ENCODE measurements at regions of chr15 and their contacts with region 1.

Region 1: DNA sequence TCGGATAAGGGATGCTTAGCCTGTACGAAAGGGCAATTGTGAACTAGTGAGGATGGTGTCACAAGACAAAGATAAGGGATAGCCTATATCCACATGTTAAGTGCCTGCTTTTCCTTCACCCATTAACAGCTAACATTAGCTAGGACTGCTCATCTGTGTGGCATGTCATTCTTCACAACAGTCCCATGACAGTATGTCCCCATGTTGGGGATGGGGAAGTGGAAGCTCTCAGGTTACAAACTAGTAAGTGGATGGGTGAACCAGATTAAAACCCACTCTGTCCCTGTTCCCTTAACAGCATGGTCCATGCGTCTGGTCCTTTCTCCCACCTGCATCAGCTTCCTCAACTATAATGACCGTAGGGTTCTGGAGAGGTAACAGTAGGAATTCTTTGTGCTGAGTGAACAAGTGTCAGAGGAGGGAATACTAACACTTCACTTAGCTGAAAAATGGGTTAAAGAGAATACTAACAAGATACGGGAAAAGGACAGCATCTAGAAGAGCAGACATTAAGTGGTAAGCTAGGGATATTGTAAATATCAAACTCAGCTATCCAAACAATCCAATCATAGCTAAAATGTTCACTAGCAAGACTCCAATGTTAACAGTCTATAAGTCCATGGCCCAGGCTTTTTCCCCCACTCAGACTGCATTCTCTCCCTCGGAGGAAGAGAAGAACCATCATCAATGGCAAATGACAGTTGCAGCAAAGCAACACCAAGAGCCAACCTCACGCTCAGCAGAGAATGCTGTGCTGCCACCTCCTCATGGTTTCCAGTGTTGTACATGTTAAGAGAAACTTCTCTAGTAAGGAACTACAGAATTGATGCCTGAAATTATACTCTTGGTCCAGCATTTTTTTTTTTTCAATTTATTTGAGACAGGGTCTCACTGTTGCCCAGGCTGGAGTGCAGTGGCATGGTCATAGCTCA is 5.0 kb downstream of the RPLP1 start:
- DNase-seq: no peak
- H3K4me3 ChIP-seq: no peak overlapping the region
- H3K27ac ChIP-seq: no peak overlapping the region
- H3K4me1 ChIP-seq: peaks cover 12% of the 10 kb centered on the region
- H3K27me3 ChIP-seq: no peaks in the 10 kb centered on the region
- CTCF ChIP-seq: no peak

Region 2: DNA sequence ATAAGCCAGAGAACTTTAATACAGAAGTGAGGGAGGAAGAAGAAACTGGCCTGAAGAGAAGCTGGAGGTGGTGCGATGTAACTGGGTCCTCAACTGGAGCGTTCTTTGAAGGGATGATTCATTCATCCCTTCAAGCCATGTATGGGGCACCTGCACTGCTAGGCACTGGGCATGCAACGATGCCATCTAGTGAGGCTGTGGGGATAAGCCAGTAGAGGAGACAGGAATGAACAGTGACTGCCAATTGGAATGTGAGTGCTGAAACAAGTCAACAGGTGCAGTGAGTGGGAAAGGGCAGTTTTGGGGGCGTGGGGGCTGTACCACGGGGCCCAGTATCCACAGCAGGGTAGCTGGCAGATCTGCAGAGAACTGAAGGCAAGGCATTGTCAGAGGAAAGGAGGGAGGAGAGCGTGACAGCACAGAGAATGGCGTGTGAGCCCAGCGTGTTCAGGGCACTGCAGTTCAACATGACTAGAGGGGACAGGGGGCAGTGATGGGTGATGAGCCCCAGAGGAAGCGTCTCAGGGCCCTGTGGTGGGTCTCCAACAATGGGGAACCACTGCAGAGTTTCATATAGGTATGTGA is 47.2 kb before region 1 on chr15:
- intact Hi-C with region 1: no loop called
- DNase-seq: no peak
- H3K4me3 ChIP-seq: no peak overlapping the region
- H3K27ac ChIP-seq: no peak overlapping the region
- H3K4me1 ChIP-seq: no peaks in the 10 kb centered on the region
- H3K27me3 ChIP-seq: no peaks in the 10 kb centered on the region
- CTCF ChIP-seq: no peak

Region 3: GRCh38 chr15:69422336-69422895 is 35.2 kb before region 1 on chr15:
- intact Hi-C with region 1: loop called (anchors 5 kb)
- DNase-seq: no peak
- H3K4me3 ChIP-seq: no peak overlapping the region
- H3K27ac ChIP-seq: no peak overlapping the region
- H3K4me1 ChIP-seq: no peaks in the 10 kb centered on the region
- H3K27me3 ChIP-seq: no peaks in the 10 kb centered on the region
- CTCF ChIP-seq: no peak